PC-9 (cell line): ENCODE measurements at regions of chr1 and their contacts with region 1.

Region 1: GRCh38 chr1:45011837-45012638 is at the start of gene UROD:
- DNase-seq: peak; percentile 91 to 94
- H3K4me3 ChIP-seq: peak within 1 kb of the TSS; percentile 75
- H3K27ac ChIP-seq: peak within 1 kb of the TSS; percentile 41
- H3K4me1 ChIP-seq: peaks cover 20% of the 10 kb centered on the region
- H3K27me3 ChIP-seq: no peaks in the 10 kb centered on the region
- CTCF ChIP-seq: no peak
- total RNA-seq, gene UROD: 77.4 and 81.1 TPM in 2 replicates

Region 2: DNA sequence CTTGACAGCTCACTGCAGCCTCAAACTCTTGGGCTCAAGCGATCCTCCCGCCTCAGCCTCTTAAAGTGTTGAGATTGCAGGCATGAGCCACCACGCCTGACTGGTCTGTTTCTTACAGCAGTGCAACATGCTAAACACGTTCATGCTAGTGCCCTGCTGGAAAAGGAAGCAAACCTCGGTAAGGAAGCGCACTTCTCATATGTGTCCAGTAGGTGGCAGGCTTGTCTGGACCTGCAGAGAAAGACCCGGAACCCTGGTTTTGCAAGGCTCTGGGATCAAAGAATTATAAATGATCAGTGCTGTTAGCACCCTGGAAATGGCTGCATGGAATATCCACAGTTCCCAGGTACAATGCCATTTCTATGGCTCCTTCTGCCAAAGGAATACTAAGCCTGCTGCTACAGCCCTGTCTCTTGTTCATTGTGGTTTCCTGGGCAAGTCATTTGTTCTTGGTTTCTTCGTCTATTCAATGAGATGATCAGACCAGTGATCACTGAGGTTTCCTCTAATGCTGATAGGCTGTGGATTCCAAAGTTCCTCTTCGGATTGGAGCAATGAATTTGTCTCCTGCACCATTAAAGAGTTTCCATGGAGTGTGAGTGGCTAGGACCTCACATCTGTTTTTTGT is 297.0 kb before region 1 on chr1:
- CTCF ChIA-PET with region 1: interaction called, 3 read pairs
- POLR2A ChIA-PET with region 1: interaction called, 15 read pairs
- intact Hi-C with region 1: loop called (anchors 5 kb)
- DNase-seq: peak; percentile 64 to 69
- H3K4me3 ChIP-seq: no peak overlapping the region
- H3K27ac ChIP-seq: no peak overlapping the region
- H3K4me1 ChIP-seq: peaks cover 21% of the 10 kb centered on the region
- H3K27me3 ChIP-seq: no peaks in the 10 kb centered on the region
- CTCF ChIP-seq: peak; percentile 91

Region 3: DNA sequence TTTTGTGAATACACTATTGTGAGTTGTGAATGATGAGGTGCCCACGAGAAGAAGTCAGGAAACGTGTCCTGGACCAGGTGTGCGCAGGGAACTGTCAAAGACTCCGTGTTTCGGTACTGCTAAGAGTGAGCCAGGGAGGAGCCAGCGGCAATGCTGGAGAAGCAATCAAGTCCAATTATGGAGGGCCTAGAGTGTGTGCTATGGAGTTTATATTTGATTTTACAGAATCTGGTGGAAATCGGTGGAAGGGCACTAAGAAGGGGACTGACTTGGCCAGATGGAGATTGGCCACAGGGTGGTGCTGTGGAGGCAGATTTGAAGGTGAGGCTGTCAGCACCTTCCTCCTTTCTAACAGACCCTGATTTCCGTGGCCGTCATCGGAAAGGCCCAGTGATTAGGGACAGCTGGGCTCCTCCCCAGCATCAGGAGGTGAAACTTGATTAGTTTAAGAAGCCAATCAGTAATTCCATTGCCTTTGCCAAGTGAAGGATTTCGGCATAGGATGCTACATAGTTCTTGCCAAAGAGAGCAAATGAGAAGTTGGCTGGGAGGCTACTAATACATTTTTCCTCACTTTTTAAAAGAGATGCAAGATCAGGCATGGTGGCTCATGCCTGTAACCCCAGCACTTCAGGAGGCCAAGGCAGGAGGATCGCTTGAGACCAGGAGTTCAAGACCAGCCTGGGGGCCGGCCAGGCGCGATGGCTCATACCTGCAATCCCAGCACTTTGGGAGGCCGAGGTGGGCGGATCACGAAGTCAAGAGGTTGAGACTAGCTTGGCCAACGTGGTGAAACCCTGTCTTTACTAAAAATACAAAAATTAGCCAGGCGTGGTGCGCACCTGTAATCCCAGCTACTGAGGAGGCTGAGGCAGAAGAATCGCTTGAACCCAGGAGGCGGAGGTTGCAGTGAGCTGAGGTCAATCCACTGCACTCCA is 176.0 kb before region 1 on chr1:
- CTCF ChIA-PET with region 1: interaction called, 5 read pairs
- POLR2A ChIA-PET with region 1: interaction called, 6 read pairs
- intact Hi-C with region 1: loop called (anchors 1 kb)
- DNase-seq: peak; percentile 61 to 84
- H3K4me3 ChIP-seq: no peak overlapping the region
- H3K27ac ChIP-seq: no peak overlapping the region
- H3K4me1 ChIP-seq: no peaks in the 10 kb centered on the region
- H3K27me3 ChIP-seq: no peaks in the 10 kb centered on the region
- CTCF ChIP-seq: peak; percentile 85

Region 4: DNA sequence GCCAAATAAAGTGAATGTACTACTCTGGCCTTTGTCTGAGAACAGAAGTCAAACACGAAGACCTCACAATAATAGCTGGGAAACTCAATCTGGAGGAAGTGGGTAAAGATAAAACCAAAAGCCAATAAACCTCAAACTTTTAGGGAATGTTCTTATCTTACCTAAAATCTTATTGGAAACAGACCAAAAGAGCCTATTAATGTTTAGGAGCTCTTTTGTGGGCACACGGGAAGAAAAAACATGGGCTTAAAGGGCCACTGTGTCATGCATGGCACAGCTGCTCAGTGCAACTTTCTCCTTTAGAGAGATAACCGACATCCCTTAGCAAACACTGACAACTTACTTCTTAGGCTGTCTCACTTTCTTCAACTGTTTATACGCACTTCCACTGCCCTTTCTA is 41.7 kb before region 1 on chr1:
- CTCF ChIA-PET with region 1: no interaction called
- POLR2A ChIA-PET with region 1: no interaction called
- intact Hi-C with region 1: no loop called
- DNase-seq: no peak
- H3K4me3 ChIP-seq: no peak overlapping the region
- H3K27ac ChIP-seq: no peak overlapping the region
- H3K4me1 ChIP-seq: no peaks in the 10 kb centered on the region
- H3K27me3 ChIP-seq: no peaks in the 10 kb centered on the region
- CTCF ChIP-seq: no peak

Region 5: GRCh38 chr1:45093334-45093733 is 81.3 kb after region 1 on chr1:
- CTCF ChIA-PET with region 1: no interaction called
- POLR2A ChIA-PET with region 1: no interaction called
- intact Hi-C with region 1: no loop called
- DNase-seq: no peak
- H3K4me3 ChIP-seq: no peak overlapping the region
- H3K27ac ChIP-seq: no peak overlapping the region
- H3K4me1 ChIP-seq: no peaks in the 10 kb centered on the region
- H3K27me3 ChIP-seq: no peaks in the 10 kb centered on the region
- CTCF ChIP-seq: no peak

Region 6: DNA sequence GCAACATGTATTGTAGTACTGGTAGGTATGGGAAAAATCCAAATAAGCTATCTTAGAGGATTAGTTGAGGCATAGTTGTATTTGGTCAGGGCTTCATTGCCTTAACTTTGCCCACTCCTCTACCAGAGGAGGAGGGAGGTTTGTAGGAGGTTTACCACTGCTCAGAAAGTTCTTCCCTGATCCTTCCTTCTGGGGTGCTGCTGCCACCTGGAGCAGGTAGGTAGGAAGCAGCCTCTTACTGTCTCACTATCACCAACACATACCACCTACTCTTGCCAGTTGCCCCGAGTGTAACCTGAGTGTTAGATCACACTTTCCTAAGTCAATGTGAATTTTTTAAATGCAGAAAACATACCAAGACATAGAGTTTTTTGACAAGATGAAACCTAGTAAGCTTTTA is 218.5 kb after region 1 on chr1:
- CTCF ChIA-PET with region 1: no interaction called
- POLR2A ChIA-PET with region 1: no interaction called
- intact Hi-C with region 1: loop called (anchors 1 kb)
- DNase-seq: no peak
- H3K4me3 ChIP-seq: no peak overlapping the region
- H3K27ac ChIP-seq: no peak overlapping the region
- H3K4me1 ChIP-seq: no peaks in the 10 kb centered on the region
- H3K27me3 ChIP-seq: no peaks in the 10 kb centered on the region
- CTCF ChIP-seq: peak; percentile 46; the same call in 1 of the 2 replicates

Region 7: GRCh38 chr1:45490626-45491486 is 478.8 kb after region 1 on chr1 and contains the start of gene TESK2:
- CTCF ChIA-PET with region 1: interaction called, 13 read pairs
- POLR2A ChIA-PET with region 1: interaction called, 4 read pairs
- intact Hi-C with region 1: loop called (anchors 1 kb)
- DNase-seq: peak; percentile 100
- H3K4me3 ChIP-seq: peak within 1 kb of the TSS; percentile 73
- H3K27ac ChIP-seq: no peak within 1 kb of the TSS
- H3K4me1 ChIP-seq: peaks cover 16% of the 10 kb centered on the region
- H3K27me3 ChIP-seq: no peaks in the 10 kb centered on the region
- CTCF ChIP-seq: 0 out of 2 replicates have a peak, but pooled peaks have one; percentile 20
- total RNA-seq, gene TESK2: 13.8 and 17.5 TPM in 2 replicates

Region 8: GRCh38 chr1:46223472-46223943 is 1211.5 kb after region 1 on chr1:
- CTCF ChIA-PET with region 1: no interaction called
- POLR2A ChIA-PET with region 1: interaction called, 4 read pairs
- intact Hi-C with region 1: loop called (anchors 10 kb)
- DNase-seq: peak; percentile 81 to 87
- H3K4me3 ChIP-seq: no peak overlapping the region
- H3K27ac ChIP-seq: no peak overlapping the region
- H3K4me1 ChIP-seq: peaks cover 5% of the 10 kb centered on the region
- H3K27me3 ChIP-seq: no peaks in the 10 kb centered on the region
- CTCF ChIP-seq: peak; percentile 97